Pancreas (tissue), 10 donors: ENCODE measurements at regions of chr3 and their contacts with region 1.

Region 1: DNA sequence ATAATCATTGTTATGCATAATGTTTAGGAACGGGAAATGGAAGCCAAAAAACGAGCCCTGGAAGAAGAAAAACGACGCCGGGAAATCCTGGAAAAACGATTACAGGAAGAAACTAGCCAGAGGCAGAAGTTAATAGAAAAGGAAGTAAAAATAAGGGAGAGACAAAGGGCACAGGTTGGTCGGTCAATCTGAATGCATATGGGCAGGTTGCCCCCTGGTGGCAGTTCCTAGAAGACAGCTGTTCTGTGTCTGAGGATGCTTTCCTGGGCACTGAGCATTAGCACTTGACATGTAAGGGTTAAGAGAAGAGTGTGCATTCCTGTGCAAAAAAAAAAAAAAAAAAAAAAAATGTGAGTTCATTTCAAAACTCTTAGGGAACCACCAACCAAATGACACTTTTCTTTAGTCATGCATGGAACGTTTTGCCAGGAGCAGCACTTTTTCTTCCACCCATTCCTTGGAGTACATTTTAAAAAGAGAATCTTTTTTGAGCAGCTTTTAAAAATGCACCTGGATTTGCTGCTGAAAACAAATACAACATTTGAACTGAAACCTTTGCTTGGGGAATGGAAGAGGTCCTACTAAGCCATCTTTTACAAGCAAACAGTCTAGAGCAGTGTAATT is 11.1 kb upstream of the ABHD10 start:
- DNase-seq: peak; percentile 65 to 85 (median 77)
- ATAC-seq: peak; percentile 94 to 100 (median 97)
- H3K4me3 ChIP-seq: no peak overlapping the region
- H3K27ac ChIP-seq: peak overlapping the region in 2 of 4 donors; percentile 30 to 47
- H3K4me1 ChIP-seq: peaks cover 0 to 6% (median 0%) of the 10 kb centered on the region in 3 donors
- H3K27me3 ChIP-seq: no peaks in the 10 kb centered on the region
- CTCF ChIP-seq: peak; percentile 76 to 85 (median 78)

Region 2: DNA sequence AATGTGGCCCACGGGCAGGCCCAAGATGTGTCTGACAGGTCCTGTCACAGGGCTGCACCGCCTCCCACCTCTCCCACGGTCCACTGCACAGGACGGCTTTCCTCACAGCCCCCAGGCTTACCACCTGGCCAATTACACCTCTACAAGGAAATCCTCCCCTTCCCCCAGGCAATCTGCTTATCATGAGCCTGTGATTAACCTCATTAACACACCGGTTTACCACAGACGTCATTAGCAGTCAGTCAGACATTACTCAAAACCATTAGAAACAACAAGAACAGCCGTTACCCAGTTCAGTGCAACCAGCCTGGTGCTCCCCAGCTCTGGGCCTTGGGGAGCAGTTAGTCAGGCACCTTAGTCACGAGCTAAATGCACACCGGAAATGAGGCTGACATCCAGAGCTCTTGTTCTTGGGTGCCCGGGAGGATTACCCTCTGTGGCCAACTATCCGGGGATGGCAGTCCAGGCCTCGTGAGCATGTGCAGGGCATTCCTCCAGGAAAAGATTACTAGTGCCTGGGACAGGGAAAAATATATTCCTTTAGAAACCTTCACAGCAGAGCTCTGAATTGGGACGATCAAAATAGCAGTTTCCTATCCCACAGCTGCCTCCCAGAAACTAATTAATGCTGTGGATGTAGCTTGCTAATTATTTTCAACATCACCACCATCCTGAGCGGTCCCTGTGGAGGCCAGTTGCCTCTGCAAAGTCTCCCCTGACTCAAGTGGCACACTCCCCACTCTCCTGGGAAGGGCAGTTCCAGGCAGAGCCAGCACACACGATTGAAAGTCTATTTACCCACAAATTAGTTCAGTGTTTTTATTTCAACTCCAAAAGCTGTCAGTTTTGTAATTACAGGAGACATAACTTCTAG is 255.2 kb before region 1 on chr3:
- intact Hi-C with region 1: loop called in 2 of 3 experiments (anchors 5 to 10 kb)
- DNase-seq: no peak
- ATAC-seq: peak in 2 of 4 donors; percentile 45 to 60
- H3K4me3 ChIP-seq: no peak overlapping the region
- H3K27ac ChIP-seq: no peak overlapping the region
- H3K4me1 ChIP-seq: no peaks in the 10 kb centered on the region
- H3K27me3 ChIP-seq: no peaks in the 10 kb centered on the region
- CTCF ChIP-seq: no peak

Region 3: GRCh38 chr3:111717601-111718000 is 250.2 kb before region 1 on chr3:
- intact Hi-C with region 1: loop called (anchors 5 to 10 kb)
- DNase-seq: peak; percentile 55 to 80 (median 61)
- ATAC-seq: peak; percentile 94 to 99 (median 98)
- H3K4me3 ChIP-seq: no peak overlapping the region
- H3K27ac ChIP-seq: no peak overlapping the region
- H3K4me1 ChIP-seq: no peaks in the 10 kb centered on the region
- H3K27me3 ChIP-seq: no peaks in the 10 kb centered on the region
- CTCF ChIP-seq: peak; percentile 89 to 93 (median 92)

Region 4: GRCh38 chr3:111723293-111724215 is 244.2 kb before region 1 on chr3:
- intact Hi-C with region 1: loop called in 2 of 3 experiments (anchors 5 to 10 kb)
- DNase-seq: no peak
- ATAC-seq: no peak
- H3K4me3 ChIP-seq: no peak overlapping the region
- H3K27ac ChIP-seq: no peak overlapping the region
- H3K4me1 ChIP-seq: no peaks in the 10 kb centered on the region
- H3K27me3 ChIP-seq: no peaks in the 10 kb centered on the region
- CTCF ChIP-seq: no peak

Region 5: GRCh38 chr3:111864821-111865656 is 102.7 kb before region 1 on chr3:
- intact Hi-C with region 1: no loop called
- DNase-seq: no peak
- ATAC-seq: peak; percentile 19 to 51 (median 32)
- H3K4me3 ChIP-seq: no peak overlapping the region
- H3K27ac ChIP-seq: peak overlapping the region in 2 of 4 donors; percentile 53 to 75
- H3K4me1 ChIP-seq: peaks cover 17 to 34% (median 17%) of the 10 kb centered on the region in 3 donors
- H3K27me3 ChIP-seq: no peaks in the 10 kb centered on the region
- CTCF ChIP-seq: no peak